ENCODE measurements at regions of chr7 and their contacts with region 1.

Region 1: GRCh38 chr7:135281363-135281949 is 47.8 kb downstream of the STRA8 start:
- DNase-seq: peak; percentile 93
- H3K4me3 Mint-ChIP-seq: no peak overlapping the region
- H3K27ac Mint-ChIP-seq: no peak overlapping the region
- H3K4me1 Mint-ChIP-seq: peaks cover 6% of the 10 kb centered on the region
- H3K27me3 Mint-ChIP-seq: peaks cover 5% of the 10 kb centered on the region

Region 2: DNA sequence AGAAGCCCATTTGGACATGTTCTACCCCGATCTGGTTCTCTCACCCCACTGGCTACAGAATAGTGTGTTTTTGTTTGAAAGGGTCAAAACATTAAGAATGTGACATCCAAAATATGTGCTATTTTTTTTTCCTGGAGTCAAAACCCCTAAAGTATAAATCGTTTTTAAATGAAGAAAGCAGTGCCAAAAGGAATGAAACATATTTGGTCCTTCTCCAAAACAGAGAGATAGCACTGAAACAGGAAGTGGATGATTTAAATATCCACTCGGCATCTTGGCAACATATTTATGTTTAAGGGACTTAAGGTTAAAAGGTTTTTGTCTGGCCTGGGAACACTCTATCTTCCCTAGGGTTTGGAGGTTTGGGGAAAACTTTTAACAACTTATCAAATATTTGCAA is 469.7 kb before region 1 on chr7:
- CTCF ChIA-PET with region 1: no interaction called
- intact Hi-C with region 1: no loop called
- DNase-seq: no peak
- H3K4me3 Mint-ChIP-seq: no peak overlapping the region
- H3K27ac Mint-ChIP-seq: no peak overlapping the region
- H3K4me1 Mint-ChIP-seq: no peaks in the 10 kb centered on the region
- H3K27me3 Mint-ChIP-seq: no peaks in the 10 kb centered on the region

Region 3: DNA sequence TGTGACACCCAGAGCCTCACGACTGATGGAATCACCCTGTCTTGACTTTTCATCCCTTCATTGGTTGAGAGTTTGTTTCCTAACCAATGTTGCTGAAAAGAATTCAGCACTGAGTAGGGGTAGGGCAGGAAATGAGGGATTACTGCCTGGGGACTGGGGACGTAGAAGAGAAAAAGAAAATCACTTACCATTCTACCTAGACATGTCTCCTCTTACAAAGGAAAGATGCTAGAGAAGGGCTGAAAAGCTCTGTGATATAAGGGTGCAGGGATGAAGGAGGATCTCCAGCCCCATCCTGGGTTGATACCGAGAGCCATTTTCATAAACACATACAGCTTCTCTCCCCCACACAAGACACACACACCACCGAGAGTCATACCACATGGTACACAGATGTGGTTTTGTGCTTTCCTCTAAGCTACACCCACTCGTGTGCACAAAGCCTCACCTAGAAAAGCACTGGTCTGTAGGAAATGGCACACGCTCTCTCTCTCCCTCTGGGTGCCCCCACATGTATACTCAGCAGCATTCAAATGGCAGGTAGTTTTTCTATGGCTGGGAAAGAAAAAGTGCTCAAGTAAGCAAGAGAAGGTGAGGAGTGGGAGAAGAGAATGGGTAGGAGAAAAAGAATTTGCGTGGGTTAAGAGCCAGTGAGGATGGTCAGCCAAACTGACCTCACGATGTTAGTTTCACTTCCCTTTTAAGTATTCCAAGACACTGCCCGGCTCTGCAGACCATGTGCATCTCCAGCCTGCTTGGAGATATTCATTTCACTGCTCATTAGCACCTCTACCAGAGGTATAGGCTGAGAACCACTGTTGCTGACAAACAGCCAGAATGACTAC is 416.2 kb before region 1 on chr7:
- CTCF ChIA-PET with region 1: no interaction called
- intact Hi-C with region 1: no loop called
- DNase-seq: peak; percentile 62
- H3K4me3 Mint-ChIP-seq: peak overlapping the region; percentile 65
- H3K27ac Mint-ChIP-seq: peak overlapping the region; percentile 77
- H3K4me1 Mint-ChIP-seq: peaks cover 39% of the 10 kb centered on the region
- H3K27me3 Mint-ChIP-seq: no peaks in the 10 kb centered on the region

Region 4: DNA sequence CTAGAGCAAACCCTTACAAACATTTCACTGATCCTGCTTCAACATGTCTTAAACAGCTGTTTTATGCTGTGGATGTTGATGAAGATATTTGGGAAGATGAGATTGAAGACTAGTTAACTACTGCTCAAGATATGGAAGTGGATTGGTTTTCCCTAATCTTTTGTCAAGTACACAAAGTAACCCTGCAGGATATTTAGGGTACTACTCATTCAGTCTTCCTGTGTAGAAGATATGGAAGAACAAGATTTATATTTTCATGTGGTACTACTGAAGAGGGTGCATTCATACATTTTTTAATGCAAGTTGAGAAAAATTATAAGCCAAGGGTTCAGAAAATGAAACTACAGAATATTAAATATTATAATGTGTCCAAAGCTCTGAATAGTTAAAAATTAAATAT is 151.9 kb before region 1 on chr7:
- CTCF ChIA-PET with region 1: no interaction called
- intact Hi-C with region 1: no loop called
- DNase-seq: no peak
- H3K4me3 Mint-ChIP-seq: no peak overlapping the region
- H3K27ac Mint-ChIP-seq: no peak overlapping the region
- H3K4me1 Mint-ChIP-seq: no peaks in the 10 kb centered on the region
- H3K27me3 Mint-ChIP-seq: no peaks in the 10 kb centered on the region

Region 5: DNA sequence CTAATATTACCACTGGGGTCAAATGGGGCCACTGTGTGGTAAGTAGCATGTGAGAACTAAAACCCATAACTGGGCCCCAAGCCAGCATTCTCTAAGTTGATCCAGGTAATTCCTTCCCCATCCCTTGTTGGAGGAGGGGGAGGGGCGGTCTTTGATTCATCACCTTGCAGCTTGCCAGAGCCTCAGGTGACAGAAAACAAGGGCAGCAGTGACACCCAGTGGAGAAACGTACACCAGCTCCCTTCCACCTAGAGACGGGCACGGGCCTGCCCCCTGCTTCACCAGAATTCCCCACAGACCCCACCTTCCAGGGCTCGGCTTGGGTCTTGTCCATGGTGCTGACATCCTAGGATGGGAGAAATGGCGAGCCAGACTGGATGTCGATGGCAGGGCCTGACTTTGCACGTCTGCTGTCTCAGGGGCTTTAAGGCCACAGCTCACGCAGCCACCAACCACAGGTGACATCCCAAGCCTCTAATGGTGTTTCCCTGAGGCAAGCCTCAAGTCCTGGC is 54.2 kb after region 1 on chr7:
- CTCF ChIA-PET with region 1: interaction called, 37 read pairs
- intact Hi-C with region 1: loop called (anchors 1 kb)
- DNase-seq: peak; percentile 73
- H3K4me3 Mint-ChIP-seq: no peak overlapping the region
- H3K27ac Mint-ChIP-seq: no peak overlapping the region
- H3K4me1 Mint-ChIP-seq: peaks cover 2% of the 10 kb centered on the region
- H3K27me3 Mint-ChIP-seq: no peaks in the 10 kb centered on the region

Region 6: GRCh38 chr7:135475521-135475920 is 194.1 kb after region 1 on chr7:
- CTCF ChIA-PET with region 1: no interaction called
- intact Hi-C with region 1: no loop called
- DNase-seq: no peak
- H3K4me3 Mint-ChIP-seq: no peak overlapping the region
- H3K27ac Mint-ChIP-seq: no peak overlapping the region
- H3K4me1 Mint-ChIP-seq: peaks cover 13% of the 10 kb centered on the region
- H3K27me3 Mint-ChIP-seq: no peaks in the 10 kb centered on the region

Region 7: GRCh38 chr7:135558337-135558767 is 276.9 kb after region 1 on chr7:
- CTCF ChIA-PET with region 1: interaction called, 9 read pairs
- intact Hi-C with region 1: loop called (anchors 1 kb)
- DNase-seq: peak; percentile 79
- H3K4me3 Mint-ChIP-seq: no peak overlapping the region
- H3K27ac Mint-ChIP-seq: no peak overlapping the region
- H3K4me1 Mint-ChIP-seq: peaks cover 29% of the 10 kb centered on the region
- H3K27me3 Mint-ChIP-seq: no peaks in the 10 kb centered on the region

Region 8: GRCh38 chr7:135645296-135645904 is 363.9 kb after region 1 on chr7:
- CTCF ChIA-PET with region 1: interaction called, 28 read pairs
- intact Hi-C with region 1: loop called (anchors 1 kb)
- DNase-seq: no peak
- H3K4me3 Mint-ChIP-seq: no peak overlapping the region
- H3K27ac Mint-ChIP-seq: no peak overlapping the region
- H3K4me1 Mint-ChIP-seq: no peaks in the 10 kb centered on the region
- H3K27me3 Mint-ChIP-seq: no peaks in the 10 kb centered on the region

Region 9: GRCh38 chr7:135795846-135796570 is 514.6 kb after region 1 on chr7:
- CTCF ChIA-PET with region 1: no interaction called
- intact Hi-C with region 1: loop called (anchors 2 kb)
- DNase-seq: no peak
- H3K4me3 Mint-ChIP-seq: no peak overlapping the region
- H3K27ac Mint-ChIP-seq: no peak overlapping the region
- H3K4me1 Mint-ChIP-seq: no peaks in the 10 kb centered on the region
- H3K27me3 Mint-ChIP-seq: peaks cover 10% of the 10 kb centered on the region

Measured in activated naive CD4-positive, alpha-beta T cell treated with anti-CD3 and anti-CD28 coated beads for 36 hours (primary cell).